Mammary epithelial cell (primary cell): ENCODE measurements at regions of chr10 and their contacts with region 1.

Region 1: DNA sequence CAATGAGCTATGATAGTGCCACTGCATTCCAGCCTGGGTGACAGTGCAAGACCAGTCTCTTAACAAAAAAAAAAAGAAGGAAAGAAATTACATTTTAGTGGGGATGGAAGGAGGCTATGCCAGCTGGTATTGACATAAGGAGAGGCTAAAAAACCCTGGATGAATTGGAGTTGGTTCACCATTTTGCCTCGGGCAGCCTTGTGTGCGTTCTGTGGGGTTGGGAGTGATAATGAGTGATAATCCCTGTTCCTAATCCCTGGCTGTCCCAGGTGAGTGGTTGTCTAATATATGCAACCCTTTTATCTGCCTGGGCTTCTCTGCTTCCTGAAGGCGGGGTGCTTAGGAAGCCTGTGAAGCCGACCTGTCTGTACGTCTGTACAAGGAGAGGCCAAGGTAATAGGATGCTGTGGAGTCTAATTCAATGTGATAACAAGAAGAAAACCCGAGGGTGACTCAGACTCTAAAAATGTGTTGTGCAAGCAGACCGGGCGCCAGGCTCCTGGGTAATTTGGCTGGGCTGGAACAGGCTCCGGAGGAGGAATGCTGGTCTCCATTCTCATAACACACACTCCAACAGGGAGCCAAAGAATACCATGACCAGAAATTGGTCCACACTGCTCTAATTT is 43.5 kb downstream of the THNSL1 start:
- DNase-seq: peak; percentile 91
- H3K4me3 ChIP-seq: no peak overlapping the region
- H3K27ac ChIP-seq: peak overlapping the region; percentile 73
- H3K4me1 ChIP-seq: peaks cover 33% of the 10 kb centered on the region
- H3K27me3 ChIP-seq: no peaks in the 10 kb centered on the region
- CTCF ChIP-seq: no peak

Region 2: GRCh38 chr10:24814568-24815313 is 245.1 kb before region 1 on chr10:
- CTCF ChIA-PET with region 1: no interaction called
- dilution Hi-C with region 1: no loop called
- in situ Hi-C with region 1: no loop called
- intact Hi-C with region 1: loop called (anchors 10 kb)
- DNase-seq: peak; percentile 95
- H3K4me3 ChIP-seq: no peak overlapping the region
- H3K27ac ChIP-seq: peak overlapping the region; percentile 88
- H3K4me1 ChIP-seq: peaks cover 37% of the 10 kb centered on the region
- H3K27me3 ChIP-seq: no peaks in the 10 kb centered on the region
- CTCF ChIP-seq: no peak

Region 3: DNA sequence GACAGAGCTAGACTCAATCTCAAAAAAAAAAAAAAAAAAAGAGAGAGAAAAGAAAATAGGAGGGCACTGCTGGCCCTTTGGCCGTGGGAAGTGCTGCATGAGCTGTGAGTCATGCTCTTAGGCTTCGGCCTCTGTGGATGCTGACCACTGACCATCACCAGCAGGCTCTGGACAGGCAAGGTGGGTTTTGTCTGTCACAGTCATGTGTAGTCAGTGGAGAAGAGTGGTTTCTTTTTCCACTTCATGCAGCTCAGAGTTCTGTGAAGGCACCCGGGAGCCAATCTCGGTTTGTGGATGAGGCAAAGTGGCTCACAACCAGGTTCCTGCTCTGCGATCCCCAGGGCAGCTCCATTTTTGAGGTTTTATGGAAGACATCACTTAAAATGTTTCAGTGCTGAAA is 165.6 kb before region 1 on chr10:
- CTCF ChIA-PET with region 1: no interaction called
- dilution Hi-C with region 1: no loop called
- in situ Hi-C with region 1: no loop called
- intact Hi-C with region 1: no loop called
- DNase-seq: no peak
- H3K4me3 ChIP-seq: no peak overlapping the region
- H3K27ac ChIP-seq: no peak overlapping the region
- H3K4me1 ChIP-seq: peaks cover 28% of the 10 kb centered on the region
- H3K27me3 ChIP-seq: no peaks in the 10 kb centered on the region
- CTCF ChIP-seq: no peak

Region 4: GRCh38 chr10:24989867-24990266 is 70.0 kb before region 1 on chr10:
- CTCF ChIA-PET with region 1: no interaction called
- dilution Hi-C with region 1: no loop called
- in situ Hi-C with region 1: no loop called
- intact Hi-C with region 1: no loop called
- DNase-seq: no peak
- H3K4me3 ChIP-seq: no peak overlapping the region
- H3K27ac ChIP-seq: no peak overlapping the region
- H3K4me1 ChIP-seq: no peaks in the 10 kb centered on the region
- H3K27me3 ChIP-seq: no peaks in the 10 kb centered on the region
- CTCF ChIP-seq: no peak